Heart left ventricle (tissue), 16 donors: ENCODE measurements at regions of chr2 and their contacts with region 1.

Region 1: GRCh38 chr2:30730736-30731647 is 76.3 kb downstream of the CAPN13 start:
- DNase-seq: no peak
- ATAC-seq: no peak
- H3K4me3 ChIP-seq: no peak overlapping the region
- H3K27ac ChIP-seq: no peak overlapping the region
- H3K4me1 ChIP-seq: no peaks in the 10 kb centered on the region
- H3K27me3 ChIP-seq: peaks cover 0 to 33% (median 4%) of the 10 kb centered on the region in 9 donors
- CTCF ChIP-seq: no peak
- POLR2A ChIP-seq: no peak

Region 2: DNA sequence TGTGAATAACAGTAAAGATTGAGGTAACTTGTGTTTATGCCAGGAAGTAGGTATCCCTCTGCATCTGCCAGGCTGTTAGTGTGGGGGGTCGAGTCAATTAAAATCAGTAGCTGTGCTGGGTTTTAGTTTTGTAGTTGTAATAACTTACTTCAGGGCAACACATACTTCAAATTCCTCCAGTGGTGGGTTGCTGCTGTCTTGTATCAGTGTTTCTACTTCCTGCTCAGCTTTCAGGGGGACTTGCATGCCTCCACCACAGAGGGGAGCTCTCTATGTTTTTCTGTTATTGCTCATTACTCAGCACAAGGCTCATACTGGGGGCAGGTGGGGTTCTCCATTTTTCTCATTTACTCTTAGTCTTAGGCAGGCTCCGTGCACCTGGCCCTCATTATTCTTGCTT is 60.5 kb before region 1 on chr2:
- intact Hi-C with region 1: no loop called
- DNase-seq: no peak
- ATAC-seq: no peak
- H3K4me3 ChIP-seq: no peak overlapping the region
- H3K27ac ChIP-seq: no peak overlapping the region
- H3K4me1 ChIP-seq: peaks cover 0 to 12% (median 0%) of the 10 kb centered on the region in 12 donors
- H3K27me3 ChIP-seq: no peaks in the 10 kb centered on the region
- CTCF ChIP-seq: no peak
- POLR2A ChIP-seq: no peak

Region 3: GRCh38 chr2:31176742-31177141 is 445.8 kb after region 1 on chr2:
- intact Hi-C with region 1: loop called in 1 of 10 experiments (anchors 5 kb)
- DNase-seq: no peak
- ATAC-seq: no peak
- H3K4me3 ChIP-seq: no peak overlapping the region
- H3K27ac ChIP-seq: no peak overlapping the region
- H3K4me1 ChIP-seq: no peaks in the 10 kb centered on the region
- H3K27me3 ChIP-seq: peaks cover 0 to 5% (median 0%) of the 10 kb centered on the region in 9 donors
- CTCF ChIP-seq: no peak
- POLR2A ChIP-seq: no peak